Posterior cingulate gyrus (tissue), 11 donors: ENCODE measurements at regions of chr1 and their contacts with region 1.

Region 1: DNA sequence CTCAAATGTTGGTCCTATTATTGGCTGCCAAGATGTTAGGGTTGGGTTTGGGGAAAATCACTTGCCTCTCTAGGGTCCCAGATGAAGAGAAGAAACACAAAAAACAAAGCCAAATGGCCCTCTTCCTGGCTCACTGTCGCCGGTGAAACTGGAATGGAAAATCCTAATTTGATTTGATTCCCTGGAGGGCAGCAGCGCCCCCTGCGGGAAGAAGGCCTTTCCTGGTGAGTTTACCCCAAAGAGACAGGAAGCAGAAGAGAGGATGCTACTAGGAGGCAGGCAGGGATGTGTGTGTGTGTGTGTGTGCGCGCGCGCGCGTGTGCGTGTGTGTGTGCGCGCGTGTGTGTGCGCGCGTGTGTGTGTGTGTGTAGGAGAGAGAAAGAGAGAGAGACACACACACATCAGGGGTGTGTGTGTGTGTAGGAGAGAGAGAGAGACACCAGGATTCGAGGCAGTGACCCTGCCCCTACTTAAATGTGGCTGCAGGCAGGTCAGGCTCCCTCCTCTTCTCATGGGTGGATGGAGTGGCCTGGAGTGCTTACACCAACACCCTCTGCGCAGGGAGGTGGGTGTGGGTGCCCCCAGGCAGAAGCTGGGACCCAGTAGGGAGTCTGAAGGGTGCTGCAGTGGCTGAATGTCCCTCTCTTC is 3.1 kb upstream of the SELENON start:
- DNase-seq: peak; percentile 66 to 96 (median 88)

Region 2: DNA sequence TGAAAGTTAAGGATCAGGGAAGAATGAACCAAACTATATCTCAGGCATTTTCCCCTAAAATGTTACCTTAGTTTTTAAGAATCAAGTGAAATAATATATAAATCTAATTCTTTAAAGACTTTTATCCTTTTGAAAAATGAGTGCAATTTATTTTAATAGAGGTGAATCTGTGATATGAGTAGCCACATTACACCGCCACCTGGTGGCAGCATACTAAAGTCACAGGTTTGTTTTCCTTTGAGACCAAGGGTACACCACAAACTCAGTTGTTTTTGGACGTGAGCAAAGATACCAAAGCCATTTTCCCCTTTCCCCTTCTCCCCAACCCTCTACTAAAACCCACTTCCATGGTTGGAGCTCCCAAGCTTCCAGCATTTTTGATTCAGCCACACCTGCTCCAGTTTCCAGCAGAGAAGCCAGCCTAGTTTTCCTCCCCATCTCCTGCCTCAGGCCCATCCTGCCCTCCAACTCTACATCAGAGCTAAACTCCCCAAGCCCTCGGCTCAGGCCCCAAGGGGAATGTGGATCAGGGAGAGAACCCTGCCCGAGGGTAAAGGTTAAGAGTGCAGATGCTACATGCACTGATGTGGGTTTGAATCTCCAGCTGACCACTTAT is 276.4 kb before region 1 on chr1:
- intact Hi-C with region 1: loop called (anchors 5 kb)
- DNase-seq: peak in 9 of 10 donors; percentile 34 to 92 (median 73)

Region 3: GRCh38 chr1:25543425-25544242 is 253.3 kb before region 1 on chr1 and contains the start of gene LDLRAP1:
- intact Hi-C with region 1: loop called (anchors 10 kb)
- DNase-seq: peak; percentile 57 to 97 (median 68)

Region 4: DNA sequence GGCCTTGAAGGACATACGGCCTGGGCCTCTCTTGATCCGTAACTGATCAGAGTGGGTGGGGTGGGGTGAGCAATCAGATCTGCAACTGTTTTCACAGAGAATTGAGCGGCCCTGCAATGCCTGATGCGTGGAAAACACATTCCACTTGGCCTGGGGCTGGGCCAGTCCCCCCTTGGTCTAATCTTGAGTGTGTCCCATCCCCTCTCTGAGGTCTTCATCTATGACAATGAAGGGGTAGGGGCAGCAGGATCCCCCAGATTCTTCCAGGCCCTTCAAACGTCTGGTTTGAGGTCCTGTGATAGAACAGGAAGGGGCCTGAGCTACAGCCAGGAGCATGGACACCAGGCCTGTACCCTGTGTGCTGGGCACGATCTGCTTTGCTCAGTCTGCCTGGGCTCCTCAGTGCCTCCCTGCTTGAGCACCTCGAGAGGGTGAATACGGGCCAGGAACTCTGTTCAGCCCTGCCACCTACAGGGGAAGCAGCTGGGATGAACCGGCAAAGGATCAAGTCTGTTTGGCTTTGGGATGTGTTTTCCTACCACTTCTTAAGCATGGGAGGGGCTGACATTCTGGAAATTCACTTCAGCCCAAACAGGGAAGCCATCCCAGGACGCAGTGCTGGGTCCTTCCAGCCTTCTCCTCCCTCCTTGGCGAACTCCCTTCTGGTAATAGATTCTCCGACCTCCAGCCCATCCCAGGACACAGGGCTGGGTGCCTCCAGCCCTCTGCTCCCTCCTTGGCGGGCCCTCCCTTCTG is 52.9 kb before region 1 on chr1:
- intact Hi-C with region 1: no loop called
- DNase-seq: peak in 5 of 10 donors; percentile 49 to 90 (median 54)